Transverse colon (tissue), 4 donors: ENCODE measurements at regions of chr10 and their contacts with region 1.

Region 1: DNA sequence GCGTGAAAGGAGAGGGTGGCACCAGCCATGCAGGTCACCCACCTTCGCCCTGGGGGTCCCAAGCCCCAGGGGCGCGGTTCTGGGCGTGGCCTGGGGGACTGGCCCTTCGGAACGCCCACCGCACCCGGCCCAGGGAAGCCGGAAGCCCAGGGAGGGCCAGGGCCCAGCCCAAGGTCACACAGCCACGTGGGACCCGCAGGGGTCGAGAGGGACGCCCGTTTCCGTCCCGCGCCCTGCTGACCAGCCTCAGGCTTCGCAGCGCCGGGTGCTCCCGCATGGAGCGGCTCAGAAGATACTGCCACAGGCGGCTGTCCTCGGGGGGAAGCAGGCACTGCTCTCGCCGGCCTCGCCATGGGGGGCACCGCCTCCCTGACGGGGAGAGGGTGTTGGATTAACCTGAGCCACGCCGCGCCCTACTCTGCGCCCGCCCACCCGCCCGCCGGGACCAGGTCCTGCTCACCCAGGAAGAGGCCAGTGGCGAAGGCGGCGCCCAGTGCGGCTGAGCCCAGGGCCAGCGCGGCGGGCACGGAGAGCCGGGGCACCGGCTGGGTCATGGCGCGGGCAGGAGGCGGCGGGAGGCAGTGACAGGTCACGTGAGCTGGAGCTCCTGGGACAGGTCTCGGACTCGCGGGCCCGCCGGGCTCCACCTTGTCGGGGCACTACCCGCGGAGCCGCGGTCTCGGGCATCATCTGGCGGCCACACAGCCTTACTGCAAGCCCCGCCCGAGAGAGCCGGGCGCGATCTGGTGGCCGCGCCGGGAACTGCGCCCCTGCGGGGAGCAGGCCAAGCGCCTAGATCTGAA is at the start of gene COMTD1:
- DNase-seq: peak; percentile 97
- H3K4me3 ChIP-seq: peak within 1 kb of the TSS; percentile 57 to 76 (median 68)
- H3K27ac ChIP-seq: peak within 1 kb of the TSS; percentile 87 to 92 (median 88)
- H3K4me1 ChIP-seq: peaks cover 0 to 31% (median 28%) of the 10 kb centered on the region in 4 donors
- H3K27me3 ChIP-seq: no peaks in the 10 kb centered on the region
- CTCF ChIP-seq: peak; percentile 100
- EP300 ChIP-seq: no peak
- POLR2A ChIP-seq: peak; percentile 37
- total RNA-seq, gene COMTD1: 90.7 to 761 (median 173) TPM

Region 2: DNA sequence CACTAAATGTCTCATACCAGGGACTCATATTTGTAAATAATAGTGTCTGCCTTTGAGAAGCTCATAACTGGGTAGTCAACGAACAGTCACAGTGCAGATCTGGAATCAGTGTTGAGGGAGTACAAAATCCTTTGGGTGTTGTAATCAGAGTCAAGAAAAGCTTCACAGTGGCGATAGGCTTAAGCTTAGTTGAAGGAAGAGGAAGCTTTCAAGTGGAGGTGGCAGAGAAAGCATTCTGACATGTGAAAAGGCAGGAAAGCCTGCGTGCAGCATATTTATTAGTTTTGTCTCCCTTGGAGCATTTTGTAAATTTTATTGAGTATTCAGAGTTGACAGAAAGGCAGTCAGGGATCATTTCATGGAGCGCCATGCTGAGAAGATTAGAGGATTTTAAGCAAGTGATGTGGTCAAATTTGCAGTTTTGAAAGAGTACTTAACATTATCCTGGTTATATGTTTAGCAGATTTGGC is 979.7 kb before region 1 on chr10:
- in situ Hi-C with region 1: loop called (anchors 10 to 25 kb)
- intact Hi-C with region 1: loop called (anchors 10 kb)
- DNase-seq: no peak
- H3K4me3 ChIP-seq: no peak overlapping the region
- H3K27ac ChIP-seq: no peak overlapping the region
- H3K4me1 ChIP-seq: peaks cover 0 to 17% (median 7%) of the 10 kb centered on the region in 4 donors
- H3K27me3 ChIP-seq: no peaks in the 10 kb centered on the region
- CTCF ChIP-seq: no peak
- EP300 ChIP-seq: no peak
- POLR2A ChIP-seq: no peak

Region 3: GRCh38 chr10:74262856-74263255 is 972.7 kb before region 1 on chr10:
- in situ Hi-C with region 1: loop called (anchors 10 to 25 kb)
- intact Hi-C with region 1: loop called (anchors 10 kb)
- DNase-seq: no peak
- H3K4me3 ChIP-seq: no peak overlapping the region
- H3K27ac ChIP-seq: no peak overlapping the region
- H3K4me1 ChIP-seq: peaks cover 0 to 5% (median 2%) of the 10 kb centered on the region in 4 donors
- H3K27me3 ChIP-seq: no peaks in the 10 kb centered on the region
- CTCF ChIP-seq: no peak
- EP300 ChIP-seq: no peak
- POLR2A ChIP-seq: no peak

Region 4: GRCh38 chr10:74826142-74827044 is 409.2 kb before region 1 on chr10 and contains the start of gene KAT6B:
- in situ Hi-C with region 1: no loop called
- intact Hi-C with region 1: loop called (anchors 10 kb)
- DNase-seq: peak; percentile 100
- H3K4me3 ChIP-seq: peak within 1 kb of the TSS; percentile 75 to 93 (median 93)
- H3K27ac ChIP-seq: peak within 1 kb of the TSS; percentile 98 to 99 (median 99)
- H3K4me1 ChIP-seq: peaks cover 13 to 47% (median 34%) of the 10 kb centered on the region in 4 donors
- H3K27me3 ChIP-seq: no peaks in the 10 kb centered on the region
- CTCF ChIP-seq: peak; percentile 19 to 59 (median 23)
- EP300 ChIP-seq: no peak
- POLR2A ChIP-seq: peak; percentile 57
- total RNA-seq, gene KAT6B: 27.3 to 67.0 (median 54.9) TPM

Region 5: GRCh38 chr10:75111367-75111906 is 124.1 kb before region 1 on chr10 and contains the start of gene SAMD8:
- in situ Hi-C with region 1: loop called (anchors 10 to 25 kb)
- intact Hi-C with region 1: loop called (anchors 5 kb)
- DNase-seq: peak; percentile 97
- H3K4me3 ChIP-seq: peak within 1 kb of the TSS; percentile 48 to 97 (median 80)
- H3K27ac ChIP-seq: peak within 1 kb of the TSS; percentile 97 to 99 (median 98)
- H3K4me1 ChIP-seq: peaks cover 7 to 26% (median 11%) of the 10 kb centered on the region in 4 donors
- H3K27me3 ChIP-seq: no peaks in the 10 kb centered on the region
- CTCF ChIP-seq: peak; percentile 29 to 58 (median 34)
- EP300 ChIP-seq: no peak
- POLR2A ChIP-seq: peak; percentile 97
- total RNA-seq, gene SAMD8: 4.6 to 26.6 (median 17.7) TPM

Region 6: DNA sequence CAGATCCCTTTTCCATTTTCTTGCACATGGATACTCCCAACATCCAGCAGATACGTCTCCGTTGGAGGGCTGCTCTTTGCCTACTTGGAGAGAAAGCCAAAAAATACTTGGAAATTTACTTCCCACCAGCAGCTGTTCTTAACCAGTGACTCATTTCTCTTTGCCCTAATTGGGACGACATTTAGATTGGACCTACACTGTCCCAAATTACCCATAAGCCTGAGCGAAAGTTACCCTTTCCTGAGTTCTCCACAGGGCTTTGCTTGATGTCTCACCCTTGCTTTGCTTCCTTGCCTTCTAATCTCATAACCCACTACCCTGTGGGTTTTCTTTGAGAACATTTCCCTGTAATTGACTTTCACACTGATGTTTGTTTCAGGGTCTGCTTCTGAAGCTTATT is 76.1 kb before region 1 on chr10:
- in situ Hi-C with region 1: no loop called
- intact Hi-C with region 1: no loop called
- DNase-seq: no peak
- H3K4me3 ChIP-seq: no peak overlapping the region
- H3K27ac ChIP-seq: no peak overlapping the region
- H3K4me1 ChIP-seq: peaks cover 0 to 6% (median 0%) of the 10 kb centered on the region in 4 donors
- H3K27me3 ChIP-seq: no peaks in the 10 kb centered on the region
- CTCF ChIP-seq: no peak
- EP300 ChIP-seq: no peak
- POLR2A ChIP-seq: no peak

Region 7: GRCh38 chr10:75187961-75188426 is 47.6 kb before region 1 on chr10:
- in situ Hi-C with region 1: no loop called
- intact Hi-C with region 1: loop called (anchors 5 kb)
- DNase-seq: peak; percentile 68
- H3K4me3 ChIP-seq: no peak overlapping the region
- H3K27ac ChIP-seq: peak overlapping the region in 3 of 4 donors; percentile 32 to 50 (median 39)
- H3K4me1 ChIP-seq: peaks cover 3 to 56% (median 28%) of the 10 kb centered on the region in 4 donors
- H3K27me3 ChIP-seq: no peaks in the 10 kb centered on the region
- CTCF ChIP-seq: peak; percentile 61 to 81 (median 70)
- EP300 ChIP-seq: no peak
- POLR2A ChIP-seq: no peak

Region 8: GRCh38 chr10:75335983-75336382 is 100.4 kb after region 1 on chr10:
- in situ Hi-C with region 1: no loop called
- intact Hi-C with region 1: no loop called
- DNase-seq: no peak
- H3K4me3 ChIP-seq: no peak overlapping the region
- H3K27ac ChIP-seq: no peak overlapping the region
- H3K4me1 ChIP-seq: no peaks in the 10 kb centered on the region
- H3K27me3 ChIP-seq: no peaks in the 10 kb centered on the region
- CTCF ChIP-seq: no peak
- EP300 ChIP-seq: no peak
- POLR2A ChIP-seq: no peak